BJ (cell line): ENCODE measurements at regions of chr13 and their contacts with region 1.

Region 1: DNA sequence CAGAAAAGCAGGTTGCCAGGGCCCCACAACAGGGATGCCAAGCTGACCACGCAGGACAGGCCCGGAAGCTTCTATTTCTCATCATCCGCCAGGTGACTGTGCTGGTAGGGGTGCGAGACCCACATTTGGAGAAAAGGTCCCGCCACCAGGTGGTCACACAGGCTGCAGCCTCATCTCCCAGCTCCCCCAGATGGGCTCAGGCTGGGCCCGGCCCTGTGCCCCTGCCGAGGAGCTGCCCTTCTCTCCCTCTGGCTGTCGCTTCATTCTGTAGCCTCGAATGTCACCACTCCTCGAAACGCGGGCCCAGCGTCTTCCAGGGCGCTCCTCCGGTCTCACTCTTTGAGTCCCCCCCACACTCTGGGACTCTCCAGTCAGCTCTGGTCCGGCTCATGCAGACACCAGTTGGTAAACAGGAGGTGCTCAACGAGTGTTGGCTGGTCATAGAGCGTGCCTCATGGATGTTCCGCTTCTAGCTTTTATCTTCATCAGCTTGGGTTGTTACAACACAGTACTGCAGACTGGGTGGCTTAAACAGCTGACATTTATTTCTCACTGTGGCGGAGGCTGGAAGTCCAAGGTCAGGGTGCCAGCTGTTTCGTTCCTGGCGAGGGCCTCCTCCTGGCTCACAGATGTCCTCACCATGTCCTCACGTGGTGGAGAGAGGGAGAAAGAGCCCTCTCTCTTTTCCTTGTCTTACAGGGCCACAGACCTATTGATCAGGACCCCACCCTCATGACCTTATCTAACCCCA is 87.1 kb downstream of the TEX29 start:
- DNase-seq: no peak
- H3K4me3 ChIP-seq: no peak overlapping the region
- H3K27me3 ChIP-seq: peaks cover 5% of the 10 kb centered on the region
- CTCF ChIP-seq: no peak

Region 2: GRCh38 chr13:110790371-110790770 is 617.2 kb before region 1 on chr13:
- CTCF ChIA-PET with region 1: no interaction called
- POLR2A ChIA-PET with region 1: no interaction called
- DNase-seq: no peak
- H3K4me3 ChIP-seq: no peak overlapping the region
- H3K27me3 ChIP-seq: peaks cover 4% of the 10 kb centered on the region; the same call in 1 of the 2 replicates
- CTCF ChIP-seq: no peak

Region 3: GRCh38 chr13:111304041-111304544 is 103.5 kb before region 1 on chr13:
- CTCF ChIA-PET with region 1: no interaction called
- POLR2A ChIA-PET with region 1: interaction called, 24 read pairs
- DNase-seq: no peak
- H3K4me3 ChIP-seq: no peak overlapping the region
- H3K27me3 ChIP-seq: no peaks in the 10 kb centered on the region
- CTCF ChIP-seq: no peak

Region 4: DNA sequence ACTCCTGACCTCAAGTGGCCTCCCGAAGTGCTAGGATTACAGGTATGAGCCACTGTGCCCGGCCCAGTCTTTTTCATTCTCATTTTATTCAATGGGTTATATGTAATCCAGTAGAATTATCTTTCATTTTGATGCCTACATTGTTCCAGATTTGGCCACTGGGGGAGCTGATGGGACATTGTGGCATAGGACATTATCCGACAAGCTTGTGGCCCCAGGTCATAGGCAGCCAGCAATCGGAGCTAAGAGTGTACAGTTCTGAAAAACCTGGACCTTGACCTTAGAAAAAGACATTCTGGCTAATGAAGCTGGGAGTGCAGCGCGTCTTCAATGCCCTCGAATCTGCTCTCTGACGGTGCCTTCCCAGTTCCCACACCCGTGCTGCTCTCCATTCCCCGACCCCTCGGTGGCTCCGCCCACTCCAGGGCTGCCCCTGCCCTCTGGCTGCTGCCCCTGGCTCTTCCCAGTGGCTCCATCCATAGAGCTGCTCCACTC is 21.6 kb after region 1 on chr13:
- CTCF ChIA-PET with region 1: interaction called, 16 read pairs
- POLR2A ChIA-PET with region 1: no interaction called
- DNase-seq: no peak
- H3K4me3 ChIP-seq: no peak overlapping the region
- H3K27me3 ChIP-seq: no peaks in the 10 kb centered on the region
- CTCF ChIP-seq: peak; percentile 58

Region 5: GRCh38 chr13:111640006-111640405 is 232.4 kb after region 1 on chr13:
- CTCF ChIA-PET with region 1: no interaction called
- POLR2A ChIA-PET with region 1: no interaction called
- DNase-seq: no peak
- H3K4me3 ChIP-seq: no peak overlapping the region
- H3K27me3 ChIP-seq: no peaks in the 10 kb centered on the region
- CTCF ChIP-seq: no peak